B cell (primary cell): ENCODE measurements at regions of chr11 and their contacts with region 1.

Region 1: GRCh38 chr11:2151500-2152257 is 9.3 kb downstream of the INS start:
- DNase-seq: peak; percentile 88
- ATAC-seq: peak; percentile 84
- H3K4me3 ChIP-seq: peak overlapping the region in 2 of 5 experiments; percentile 9 to 14
- H3K4me3 Mint-ChIP-seq: peak overlapping the region; percentile 52
- H3K27ac ChIP-seq: no peak overlapping the region
- H3K27ac Mint-ChIP-seq: peak overlapping the region; percentile 46
- H3K4me1 ChIP-seq: peaks cover 5 to 9% of the 10 kb centered on the region in 2 donors
- H3K4me1 Mint-ChIP-seq: peaks cover 10% of the 10 kb centered on the region
- H3K27me3 ChIP-seq: peaks cover 0 to 34% (median 17%) of the 10 kb centered on the region in 4 experiments
- H3K27me3 Mint-ChIP-seq: peaks cover 35% of the 10 kb centered on the region
- CTCF ChIP-seq: peak; percentile 77

Region 2: GRCh38 chr11:1652771-1653540 is 498.7 kb before region 1 on chr11:
- CTCF ChIA-PET with region 1: interaction called, 135 read pairs
- POLR2A ChIA-PET with region 1: no interaction called
- intact Hi-C with region 1: loop called (anchors 1 kb)
- DNase-seq: peak; percentile 78
- ATAC-seq: peak; percentile 91
- H3K4me3 ChIP-seq: no peak overlapping the region
- H3K4me3 Mint-ChIP-seq: no peak overlapping the region
- H3K27ac ChIP-seq: no peak overlapping the region
- H3K27ac Mint-ChIP-seq: no peak overlapping the region
- H3K4me1 ChIP-seq: peaks cover 0 to 6% of the 10 kb centered on the region in 2 donors
- H3K4me1 Mint-ChIP-seq: no peaks in the 10 kb centered on the region
- H3K27me3 ChIP-seq: peaks cover 0 to 22% (median 4%) of the 10 kb centered on the region in 4 experiments
- H3K27me3 Mint-ChIP-seq: peaks cover 39% of the 10 kb centered on the region
- CTCF ChIP-seq: peak; percentile 97

Region 3: DNA sequence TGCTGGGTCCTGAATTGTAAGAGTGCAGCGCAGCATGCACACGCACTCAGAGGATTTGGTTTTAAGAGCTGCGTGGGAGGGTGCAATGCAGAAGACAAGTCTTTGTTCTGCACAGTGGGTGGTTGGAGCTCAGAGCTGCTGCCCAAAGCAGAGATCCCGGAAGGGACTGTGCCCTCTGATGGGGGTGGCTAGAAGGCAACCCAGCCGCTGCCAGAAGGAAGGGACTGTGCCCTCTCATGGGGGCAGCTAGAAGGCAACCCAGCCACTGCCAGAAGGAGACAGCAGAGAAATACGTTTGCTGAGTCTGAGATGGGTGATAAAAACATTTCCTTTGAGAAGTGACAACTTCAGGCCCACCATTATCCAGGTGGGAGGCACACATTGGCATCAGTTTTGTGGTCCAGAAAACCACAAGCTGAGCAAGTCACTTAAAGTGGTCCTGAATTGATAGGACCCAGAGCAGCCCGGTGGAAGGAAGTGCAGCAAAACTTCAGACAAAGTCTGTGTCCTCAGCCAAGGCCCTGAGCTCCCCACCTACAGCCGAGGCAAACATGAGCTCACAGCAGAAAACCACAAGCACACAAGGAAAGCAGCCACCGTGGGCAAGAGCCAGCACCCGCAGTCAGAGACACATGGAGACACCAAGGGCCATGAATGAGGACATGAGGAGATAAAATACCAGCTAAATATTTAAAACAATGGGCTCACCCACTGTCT is 450.4 kb before region 1 on chr11:
- CTCF ChIA-PET with region 1: interaction called, 18 read pairs
- POLR2A ChIA-PET with region 1: no interaction called
- intact Hi-C with region 1: no loop called
- DNase-seq: no peak
- ATAC-seq: no peak
- H3K4me3 ChIP-seq: no peak overlapping the region
- H3K4me3 Mint-ChIP-seq: no peak overlapping the region
- H3K27ac ChIP-seq: no peak overlapping the region
- H3K27ac Mint-ChIP-seq: no peak overlapping the region
- H3K4me1 ChIP-seq: peaks cover 11 to 18% of the 10 kb centered on the region in 2 donors
- H3K4me1 Mint-ChIP-seq: peaks cover 21% of the 10 kb centered on the region
- H3K27me3 ChIP-seq: peaks cover 0 to 9% (median 0%) of the 10 kb centered on the region in 4 experiments
- H3K27me3 Mint-ChIP-seq: peaks cover 23% of the 10 kb centered on the region
- CTCF ChIP-seq: no peak

Region 4: GRCh38 chr11:1837171-1838076 is 314.3 kb before region 1 on chr11:
- CTCF ChIA-PET with region 1: interaction called, 71 read pairs
- POLR2A ChIA-PET with region 1: no interaction called
- intact Hi-C with region 1: no loop called
- DNase-seq: peak; percentile 88
- ATAC-seq: peak; percentile 75
- H3K4me3 ChIP-seq: peak overlapping the region in 1 of 5 experiments; percentile 5
- H3K4me3 Mint-ChIP-seq: peak overlapping the region; percentile 56
- H3K27ac ChIP-seq: peak overlapping the region; percentile 22 to 68
- H3K27ac Mint-ChIP-seq: peak overlapping the region; percentile 78
- H3K4me1 ChIP-seq: peaks cover 41 to 51% of the 10 kb centered on the region in 2 donors
- H3K4me1 Mint-ChIP-seq: peaks cover 26% of the 10 kb centered on the region
- H3K27me3 ChIP-seq: peaks cover 0 to 19% (median 5%) of the 10 kb centered on the region in 4 experiments
- H3K27me3 Mint-ChIP-seq: no peaks in the 10 kb centered on the region
- CTCF ChIP-seq: peak; percentile 90

Region 5: DNA sequence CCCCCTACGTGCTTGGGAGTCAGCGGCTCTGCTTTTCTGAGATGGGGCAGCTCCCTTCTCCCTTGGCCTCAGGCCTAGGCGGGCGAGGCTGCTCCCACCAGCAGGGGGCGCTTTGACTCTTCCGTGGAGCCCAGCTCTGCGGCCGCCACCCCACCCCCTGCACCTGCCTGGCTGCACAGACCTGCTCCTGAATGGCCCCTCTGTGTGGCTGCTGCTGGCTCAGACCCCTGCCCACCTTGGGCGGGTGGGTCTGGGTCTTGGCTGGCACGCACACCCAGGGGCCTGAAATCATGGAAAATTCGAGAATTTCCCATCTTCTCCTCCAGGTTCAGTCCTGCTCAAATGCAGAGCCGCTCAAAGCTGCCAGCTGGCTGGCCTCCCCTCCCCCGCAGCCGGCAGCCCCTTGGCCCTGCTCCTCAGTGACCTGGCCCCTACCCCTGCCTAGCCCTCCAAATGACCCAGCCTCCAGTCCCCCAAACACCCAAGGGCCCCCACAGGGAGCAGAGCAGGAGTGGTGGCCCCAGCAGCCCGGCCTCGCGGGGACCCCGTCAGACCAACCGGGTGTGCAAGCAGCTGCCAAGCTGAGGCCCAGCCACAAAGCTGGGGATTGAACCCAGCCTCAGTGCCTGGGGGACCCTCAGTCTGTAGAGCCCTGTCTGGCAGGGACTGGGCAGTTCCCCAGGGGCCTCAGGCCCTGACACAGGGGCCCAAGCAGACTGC is 269.0 kb before region 1 on chr11:
- CTCF ChIA-PET with region 1: interaction called, 17 read pairs
- POLR2A ChIA-PET with region 1: no interaction called
- intact Hi-C with region 1: loop called (anchors 5 kb)
- DNase-seq: peak; percentile 86
- ATAC-seq: peak; percentile 74
- H3K4me3 ChIP-seq: no peak overlapping the region
- H3K4me3 Mint-ChIP-seq: peak overlapping the region; percentile 34
- H3K27ac ChIP-seq: no peak overlapping the region
- H3K27ac Mint-ChIP-seq: peak overlapping the region; percentile 75
- H3K4me1 ChIP-seq: peaks cover 32 to 46% of the 10 kb centered on the region in 2 donors
- H3K4me1 Mint-ChIP-seq: peaks cover 38% of the 10 kb centered on the region
- H3K27me3 ChIP-seq: no peaks in the 10 kb centered on the region
- H3K27me3 Mint-ChIP-seq: no peaks in the 10 kb centered on the region
- CTCF ChIP-seq: peak; percentile 87

Region 6: DNA sequence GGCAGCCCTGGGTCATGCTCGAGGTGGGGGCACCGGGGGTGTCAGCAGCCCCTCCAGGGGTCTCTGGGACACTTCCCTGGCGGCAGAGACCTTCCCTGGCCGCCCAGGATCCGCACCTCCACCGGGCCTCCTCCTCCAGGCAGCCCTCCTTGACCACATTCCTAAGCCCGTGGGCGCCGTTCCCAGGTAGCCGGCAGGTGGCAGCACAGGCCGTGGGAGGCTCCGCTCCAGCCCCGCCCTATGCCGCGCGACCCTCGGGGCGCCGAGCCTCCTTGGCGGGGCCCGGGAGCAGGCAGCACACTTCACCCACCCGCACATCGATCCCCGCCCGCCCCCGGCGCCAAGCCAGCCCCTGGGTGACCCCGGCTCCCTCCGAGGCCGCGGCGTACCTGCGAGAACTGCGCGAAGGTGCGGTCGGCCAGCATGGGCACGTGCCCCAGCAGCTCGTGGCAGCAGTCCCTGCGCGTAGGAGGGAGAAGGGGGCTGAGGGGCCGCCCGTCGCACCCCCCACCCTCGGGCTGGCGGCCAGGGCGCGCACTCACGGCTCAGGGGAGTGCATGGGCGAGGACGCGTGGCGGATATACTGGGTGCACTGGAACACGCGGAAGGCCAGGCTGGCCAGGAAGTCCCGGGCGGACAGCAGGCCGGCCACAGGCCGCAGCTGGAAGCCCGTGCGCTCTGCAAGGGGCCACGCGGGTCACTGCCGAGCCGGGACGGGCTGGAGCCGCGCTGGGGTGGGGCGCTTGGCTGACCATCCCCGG is 14.6 kb after region 1 on chr11:
- CTCF ChIA-PET with region 1: interaction called, 16 read pairs
- POLR2A ChIA-PET with region 1: no interaction called
- intact Hi-C with region 1: no loop called
- DNase-seq: peak; percentile 59
- ATAC-seq: peak; percentile 64
- H3K4me3 ChIP-seq: no peak overlapping the region
- H3K4me3 Mint-ChIP-seq: no peak overlapping the region
- H3K27ac ChIP-seq: no peak overlapping the region
- H3K27ac Mint-ChIP-seq: no peak overlapping the region
- H3K4me1 ChIP-seq: peaks cover 0 to 3% of the 10 kb centered on the region in 2 donors
- H3K4me1 Mint-ChIP-seq: no peaks in the 10 kb centered on the region
- H3K27me3 ChIP-seq: peaks cover 0 to 10% (median 0%) of the 10 kb centered on the region in 4 experiments
- H3K27me3 Mint-ChIP-seq: no peaks in the 10 kb centered on the region
- CTCF ChIP-seq: peak; percentile 71